ENCODE measurements at regions of chr15 and their contacts with region 1.

Region 1: DNA sequence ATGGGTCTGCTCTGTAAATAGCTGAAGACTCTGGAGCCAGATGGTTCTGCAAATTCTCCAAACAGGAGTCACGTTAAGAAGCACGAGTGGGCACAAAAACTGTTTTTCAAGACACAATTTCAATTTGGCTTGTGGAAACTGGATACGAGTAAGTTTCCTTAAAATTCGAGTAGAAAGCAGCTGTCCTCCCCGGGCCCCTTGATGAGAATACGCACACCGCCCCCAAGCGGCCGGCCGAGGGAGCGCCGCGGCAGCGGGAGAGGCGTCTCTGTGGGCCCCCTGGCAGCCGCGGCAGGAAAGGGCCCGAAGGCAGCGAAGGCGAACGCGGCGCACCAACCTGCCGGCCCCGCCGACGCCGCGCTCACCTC is 778 bp upstream of the THBS1 start:
- DNase-seq: peak; percentile 77 to 81 (median 80)
- ATAC-seq: peak; percentile 96
- H3K4me3 ChIP-seq: peak overlapping the region; percentile 24
- H3K27ac ChIP-seq: no peak overlapping the region
- H3K4me1 ChIP-seq: peaks cover 0 to 12% of the 10 kb centered on the region in 2 experiments; a peak in 1 of 5 replicates
- H3K27me3 ChIP-seq: peaks cover 26 to 40% of the 10 kb centered on the region in 2 experiments; a peak in 4 of 5 replicates
- CTCF ChIP-seq: peak; percentile 85 to 98 (median 95)
- EP300 ChIP-seq: no peak
- POLR2A ChIP-seq: no peak
- RAD21 ChIP-seq: peak; percentile 89 to 93

Region 2: DNA sequence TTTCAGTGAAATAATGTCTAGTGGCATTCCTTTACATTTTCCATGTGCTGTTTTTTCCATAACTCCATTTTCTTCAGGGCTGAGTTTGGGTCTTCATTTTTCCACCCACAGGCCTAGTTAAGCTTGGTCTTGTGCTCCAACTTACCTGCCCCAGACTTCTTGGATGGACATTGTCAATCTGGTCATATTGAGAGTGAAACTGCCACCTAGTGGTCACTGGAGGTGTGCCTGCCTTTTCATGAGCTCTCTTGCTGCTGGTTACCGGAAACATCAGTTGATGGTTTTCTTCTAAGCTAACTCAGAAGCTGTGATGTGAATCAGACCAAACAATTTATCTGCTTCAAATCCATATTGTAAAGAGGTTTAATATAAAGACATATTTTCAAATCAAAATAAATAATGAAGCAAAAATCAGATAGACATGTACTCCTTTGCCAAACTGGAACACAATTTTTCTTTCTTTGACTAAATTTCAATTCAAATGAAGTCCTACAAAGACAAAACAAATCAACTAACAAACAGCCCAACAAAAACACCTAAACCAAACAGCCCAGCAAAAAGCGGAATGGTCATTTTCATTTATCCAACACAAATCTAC is 880.4 kb before region 1 on chr15:
- CTCF ChIA-PET with region 1: no interaction called
- POLR2A ChIA-PET with region 1: no interaction called
- in situ Hi-C with region 1: no loop called
- intact Hi-C with region 1: loop called (anchors 10 kb)
- DNase-seq: peak; percentile 68 to 79 (median 74)
- ATAC-seq: peak; percentile 94
- H3K4me3 ChIP-seq: no peak overlapping the region
- H3K27ac ChIP-seq: no peak overlapping the region
- H3K4me1 ChIP-seq: no peaks in the 10 kb centered on the region
- H3K27me3 ChIP-seq: peaks cover 0 to 8% of the 10 kb centered on the region in 2 experiments; a peak in 3 of 5 replicates
- CTCF ChIP-seq: peak; percentile 56 to 86 (median 74)
- EP300 ChIP-seq: no peak
- POLR2A ChIP-seq: no peak
- RAD21 ChIP-seq: peak; percentile 34 to 68

Region 3: DNA sequence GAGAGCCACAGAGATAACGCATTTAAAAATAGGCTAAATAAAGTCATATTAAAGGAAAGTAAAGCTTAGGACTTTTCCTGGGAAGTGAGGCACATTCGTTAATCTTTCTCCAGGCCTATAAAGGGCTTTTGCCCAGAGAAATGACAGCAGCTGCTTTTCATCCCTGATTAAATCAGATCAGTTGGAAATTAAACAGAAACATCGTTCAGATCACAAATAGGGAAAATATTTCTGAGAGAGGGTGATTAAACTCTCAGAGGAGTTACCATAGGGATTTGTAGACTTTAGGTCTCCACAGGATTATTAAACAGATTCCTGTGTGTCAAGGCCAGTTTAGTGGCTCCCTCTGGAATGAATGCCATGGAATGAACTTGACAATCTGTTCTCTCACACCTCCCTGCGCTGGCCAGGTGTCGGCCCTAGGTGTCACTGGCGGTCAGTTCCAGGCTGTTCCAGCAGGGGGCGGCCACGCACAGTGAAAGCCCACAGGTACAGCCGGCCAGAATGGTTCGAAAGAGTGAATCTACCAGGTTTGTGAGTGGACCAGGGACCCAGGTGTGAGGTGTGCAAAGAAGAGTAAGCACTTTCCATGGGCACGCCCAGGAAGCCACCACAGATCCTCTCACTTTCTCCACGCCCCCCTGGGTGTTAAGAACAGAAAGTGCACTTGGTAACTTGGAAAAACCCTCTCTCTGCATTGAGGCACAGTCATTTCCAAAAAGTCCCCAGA is 762.5 kb before region 1 on chr15:
- CTCF ChIA-PET with region 1: no interaction called
- POLR2A ChIA-PET with region 1: no interaction called
- in situ Hi-C with region 1: loop called (anchors 25 kb)
- intact Hi-C with region 1: loop called (anchors 2 kb)
- DNase-seq: peak; percentile 77 to 84 (median 80)
- ATAC-seq: peak; percentile 100
- H3K4me3 ChIP-seq: no peak overlapping the region
- H3K27ac ChIP-seq: no peak overlapping the region
- H3K4me1 ChIP-seq: no peaks in the 10 kb centered on the region
- H3K27me3 ChIP-seq: peaks cover 0 to 5% of the 10 kb centered on the region in 2 experiments; a peak in 2 of 5 replicates
- CTCF ChIP-seq: peak; percentile 99 to 100 (median 99)
- EP300 ChIP-seq: no peak
- POLR2A ChIP-seq: no peak
- RAD21 ChIP-seq: peak; percentile 69 to 90

Region 4: DNA sequence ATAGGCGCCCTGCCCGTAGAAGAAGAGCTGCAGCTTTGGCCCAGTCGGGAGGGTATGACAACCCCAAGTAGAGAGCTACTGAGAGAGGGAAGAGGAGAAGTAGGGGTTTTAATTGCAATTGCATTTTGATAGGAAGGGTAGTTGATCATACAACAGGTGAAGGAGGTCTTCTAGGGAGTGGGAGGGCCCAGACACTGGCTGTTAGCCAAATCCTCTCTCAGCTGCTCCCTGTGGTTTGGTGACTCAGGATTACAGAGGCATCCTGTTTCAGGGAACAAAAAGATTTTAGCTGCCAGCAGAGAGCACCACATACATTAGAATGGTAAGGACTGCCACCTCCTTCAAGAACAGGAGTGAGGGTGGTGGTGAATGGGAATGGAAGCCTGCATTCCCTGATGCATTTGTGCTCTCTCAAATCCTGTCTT is 408.1 kb before region 1 on chr15:
- CTCF ChIA-PET with region 1: interaction called, 7 read pairs
- POLR2A ChIA-PET with region 1: no interaction called
- in situ Hi-C with region 1: no loop called
- intact Hi-C with region 1: loop called (anchors 2 kb)
- DNase-seq: peak; percentile 17 to 76 (median 42)
- ATAC-seq: peak; percentile 95
- H3K4me3 ChIP-seq: no peak overlapping the region
- H3K27ac ChIP-seq: no peak overlapping the region
- H3K4me1 ChIP-seq: peaks cover 0 to 3% of the 10 kb centered on the region in 2 experiments; a peak in 1 of 5 replicates
- H3K27me3 ChIP-seq: peaks cover 6 to 7% of the 10 kb centered on the region in 2 experiments; a peak in 2 of 5 replicates
- CTCF ChIP-seq: peak; percentile 42 to 64 (median 48); a peak in 4 of 6 replicates
- EP300 ChIP-seq: peak; percentile 9; the same call in 1 of the 2 replicates
- POLR2A ChIP-seq: no peak
- RAD21 ChIP-seq: peak; percentile 74 to 82

Region 5: GRCh38 chr15:39391230-39391629 is 188.9 kb before region 1 on chr15:
- CTCF ChIA-PET with region 1: no interaction called
- POLR2A ChIA-PET with region 1: no interaction called
- in situ Hi-C with region 1: no loop called
- intact Hi-C with region 1: loop called (anchors 10 kb)
- DNase-seq: no peak
- ATAC-seq: no peak
- H3K4me3 ChIP-seq: no peak overlapping the region
- H3K27ac ChIP-seq: no peak overlapping the region
- H3K4me1 ChIP-seq: no peaks in the 10 kb centered on the region
- H3K27me3 ChIP-seq: no peaks in the 10 kb centered on the region
- CTCF ChIP-seq: no peak
- EP300 ChIP-seq: no peak
- POLR2A ChIP-seq: no peak
- RAD21 ChIP-seq: no peak

Region 6: GRCh38 chr15:39756806-39757522 is 176.9 kb after region 1 on chr15:
- CTCF ChIA-PET with region 1: interaction called, 4 read pairs
- POLR2A ChIA-PET with region 1: no interaction called
- in situ Hi-C with region 1: no loop called
- intact Hi-C with region 1: loop called (anchors 2 kb)
- DNase-seq: peak; percentile 22 to 70 (median 23)
- ATAC-seq: peak; percentile 59; the same call in 2 of the 3 replicates
- H3K4me3 ChIP-seq: no peak overlapping the region
- H3K27ac ChIP-seq: no peak overlapping the region
- H3K4me1 ChIP-seq: no peaks in the 10 kb centered on the region
- H3K27me3 ChIP-seq: no peaks in the 10 kb centered on the region
- CTCF ChIP-seq: peak; percentile 54 to 89 (median 63); a peak in 5 of 6 replicates
- EP300 ChIP-seq: no peak
- POLR2A ChIP-seq: no peak
- RAD21 ChIP-seq: peak; percentile 91 to 93